ENCODE measurements at regions of chr3 and their contacts with region 1.

Region 1: DNA sequence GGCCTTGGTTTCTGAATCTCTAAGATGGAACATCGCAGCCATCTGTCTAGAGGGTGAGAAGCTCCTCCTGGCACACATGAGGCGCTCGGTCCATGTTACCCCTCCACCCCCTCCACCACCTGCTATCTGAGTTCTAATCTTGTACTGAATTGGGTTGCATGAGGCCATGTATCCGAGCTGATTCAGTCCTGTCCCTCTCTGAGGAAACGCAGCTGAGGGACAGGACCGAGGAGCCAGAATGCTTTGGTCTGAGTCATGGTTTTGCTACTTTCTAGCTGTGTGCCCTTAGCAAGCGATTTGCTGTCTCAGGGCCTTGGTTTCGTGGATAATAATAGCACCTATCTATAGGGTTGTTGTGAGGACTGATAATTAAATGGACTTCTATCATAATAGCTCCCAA is 87.8 kb upstream of the SEC13 start:
- DNase-seq: no peak
- ATAC-seq: peak; percentile 6; the same call in 1 of the 3 replicates
- H3K4me3 ChIP-seq: no peak overlapping the region
- H3K27ac ChIP-seq: no peak overlapping the region
- H3K4me1 ChIP-seq: no peaks in the 10 kb centered on the region; a peak in 1 of 5 replicates
- H3K27me3 ChIP-seq: peaks cover 22 to 66% of the 10 kb centered on the region in 2 experiments; a peak in 4 of 5 replicates
- CTCF ChIP-seq: no peak
- EP300 ChIP-seq: no peak
- POLR2A ChIP-seq: no peak
- RAD21 ChIP-seq: no peak

Region 2: GRCh38 chr3:10337323-10338163 is 71.1 kb before region 1 on chr3:
- CTCF ChIA-PET with region 1: no interaction called
- POLR2A ChIA-PET with region 1: no interaction called
- in situ Hi-C with region 1: no loop called
- intact Hi-C with region 1: loop called (anchors 5 kb)
- DNase-seq: no peak
- ATAC-seq: peak; percentile 46
- H3K4me3 ChIP-seq: no peak overlapping the region
- H3K27ac ChIP-seq: no peak overlapping the region
- H3K4me1 ChIP-seq: peaks cover 0 to 28% of the 10 kb centered on the region in 2 experiments; a peak in 3 of 5 replicates
- H3K27me3 ChIP-seq: peaks cover 62 to 97% of the 10 kb centered on the region in 2 experiments; a peak in 4 of 5 replicates
- CTCF ChIP-seq: peak in 2 of 3 experiments; percentile 23; a peak in 1 of 6 replicates
- EP300 ChIP-seq: no peak
- POLR2A ChIP-seq: no peak
- RAD21 ChIP-seq: no peak; a peak in 1 of 4 replicates

Region 3: DNA sequence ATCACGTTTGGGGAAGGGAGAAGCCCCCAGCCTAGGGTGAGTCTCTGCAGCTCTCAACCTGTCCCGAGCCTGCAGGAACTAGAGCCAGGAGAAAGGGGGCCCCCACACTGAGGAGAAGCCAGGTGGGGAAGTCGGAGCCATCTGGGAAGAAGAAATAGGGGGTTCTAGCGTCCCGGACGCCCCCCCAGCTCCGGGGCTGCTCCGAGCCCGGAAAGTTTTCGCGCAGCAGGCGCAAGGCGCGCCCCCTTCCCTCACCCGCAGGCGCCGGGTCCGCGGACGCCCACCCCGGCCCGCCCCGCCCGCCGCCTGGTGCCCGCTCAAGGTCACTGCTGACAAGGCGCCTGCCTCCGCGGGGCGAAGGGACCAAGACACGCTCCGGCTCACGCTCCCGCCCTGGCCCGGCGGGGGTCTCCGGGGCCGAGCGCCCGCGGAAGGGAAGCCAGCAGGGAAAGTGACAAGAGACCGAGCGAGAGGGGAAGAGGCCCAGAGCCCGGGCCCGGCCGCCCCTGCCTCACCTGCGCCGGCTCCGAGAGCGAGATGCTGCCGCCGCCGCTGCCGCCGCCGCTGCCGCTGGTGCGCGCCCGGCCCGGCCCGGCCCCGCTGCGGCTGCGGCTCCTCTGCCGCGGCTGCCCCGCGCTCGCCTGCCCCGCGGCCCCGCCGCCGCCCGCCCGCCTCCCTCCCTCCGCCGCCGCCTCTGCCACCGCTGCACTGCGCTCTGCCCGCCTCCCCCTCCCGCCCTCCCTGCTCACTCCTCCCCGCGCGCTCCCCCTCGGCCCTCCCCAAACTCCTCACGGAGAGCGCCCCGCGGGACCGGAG is 298.9 kb after region 1 on chr3:
- CTCF ChIA-PET with region 1: no interaction called
- POLR2A ChIA-PET with region 1: no interaction called
- in situ Hi-C with region 1: no loop called
- intact Hi-C with region 1: no loop called
- DNase-seq: peak in 1 of 4 experiments; percentile 19
- ATAC-seq: no peak
- H3K4me3 ChIP-seq: no peak overlapping the region
- H3K27ac ChIP-seq: no peak overlapping the region
- H3K4me1 ChIP-seq: no peaks in the 10 kb centered on the region
- H3K27me3 ChIP-seq: peaks cover 2 to 25% of the 10 kb centered on the region in 2 experiments; a peak in 3 of 5 replicates
- CTCF ChIP-seq: no peak
- EP300 ChIP-seq: no peak
- POLR2A ChIP-seq: no peak
- RAD21 ChIP-seq: no peak